Prostate gland (tissue), 2 donors: ENCODE measurements at regions of chr4 and their contacts with region 1.

Region 1: DNA sequence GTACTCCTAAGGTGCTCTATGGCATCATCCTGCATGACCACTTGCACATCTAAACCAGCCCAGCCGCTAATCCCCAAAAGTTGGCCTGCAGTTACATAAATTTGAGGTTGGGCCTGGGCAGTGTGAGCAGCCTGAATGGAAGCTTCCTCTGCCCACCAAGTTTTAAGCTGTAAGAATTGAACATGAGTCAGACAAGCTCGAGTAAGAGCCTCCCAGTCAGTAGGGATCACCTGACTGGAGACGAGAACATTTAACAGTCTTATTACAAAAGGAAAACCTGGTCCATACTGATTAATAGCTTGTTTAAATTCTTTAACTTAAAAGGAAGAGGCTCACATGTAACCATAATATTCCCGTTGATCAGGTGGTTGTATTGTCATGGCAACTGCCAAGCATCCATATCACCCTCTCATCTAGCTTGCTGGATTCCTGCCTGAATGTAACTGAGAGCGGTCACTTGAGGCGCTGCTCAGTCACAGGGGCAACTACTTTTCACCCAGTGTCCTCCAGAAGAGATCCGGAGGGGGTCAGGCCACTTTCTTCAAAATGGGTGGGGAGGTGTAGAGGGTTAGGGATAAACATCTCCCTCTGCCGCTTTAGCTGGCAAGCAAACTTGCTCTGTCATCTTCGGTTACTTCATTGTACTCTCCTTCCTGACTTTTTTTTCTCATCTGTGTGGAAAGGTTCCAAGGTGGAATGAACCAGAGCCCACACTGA is 56.6 kb upstream of the WDR1 start:
- DNase-seq: peak; percentile 52
- H3K4me3 ChIP-seq: no peak overlapping the region
- H3K27ac ChIP-seq: peak overlapping the region; percentile 57 to 63
- H3K4me1 ChIP-seq: peaks cover 8% of the 10 kb centered on the region
- H3K27me3 ChIP-seq: no peaks in the 10 kb centered on the region
- CTCF ChIP-seq: peak in 1 of 4 experiments; percentile 25
- POLR2A ChIP-seq: no peak

Region 2: GRCh38 chr4:10116580-10117358 is 56.4 kb before region 1 on chr4 and contains the start of gene WDR1:
- intact Hi-C with region 1: loop called (anchors 2 kb)
- DNase-seq: peak; percentile 95
- H3K4me3 ChIP-seq: peak within 1 kb of the TSS; percentile 76 to 78
- H3K27ac ChIP-seq: peak within 1 kb of the TSS; percentile 92
- H3K4me1 ChIP-seq: peaks cover 15% of the 10 kb centered on the region
- H3K27me3 ChIP-seq: no peaks in the 10 kb centered on the region
- CTCF ChIP-seq: no peak
- POLR2A ChIP-seq: peak; percentile 93
- total RNA-seq, gene WDR1: 127 to 171 TPM

Region 3: GRCh38 chr4:10232114-10232513 is 58.9 kb after region 1 on chr4:
- intact Hi-C with region 1: loop called (anchors 2 kb)
- DNase-seq: no peak
- H3K4me3 ChIP-seq: no peak overlapping the region
- H3K27ac ChIP-seq: peak overlapping the region; percentile 27 to 55
- H3K4me1 ChIP-seq: no peaks in the 10 kb centered on the region
- H3K27me3 ChIP-seq: no peaks in the 10 kb centered on the region
- CTCF ChIP-seq: no peak
- POLR2A ChIP-seq: no peak

Region 4: DNA sequence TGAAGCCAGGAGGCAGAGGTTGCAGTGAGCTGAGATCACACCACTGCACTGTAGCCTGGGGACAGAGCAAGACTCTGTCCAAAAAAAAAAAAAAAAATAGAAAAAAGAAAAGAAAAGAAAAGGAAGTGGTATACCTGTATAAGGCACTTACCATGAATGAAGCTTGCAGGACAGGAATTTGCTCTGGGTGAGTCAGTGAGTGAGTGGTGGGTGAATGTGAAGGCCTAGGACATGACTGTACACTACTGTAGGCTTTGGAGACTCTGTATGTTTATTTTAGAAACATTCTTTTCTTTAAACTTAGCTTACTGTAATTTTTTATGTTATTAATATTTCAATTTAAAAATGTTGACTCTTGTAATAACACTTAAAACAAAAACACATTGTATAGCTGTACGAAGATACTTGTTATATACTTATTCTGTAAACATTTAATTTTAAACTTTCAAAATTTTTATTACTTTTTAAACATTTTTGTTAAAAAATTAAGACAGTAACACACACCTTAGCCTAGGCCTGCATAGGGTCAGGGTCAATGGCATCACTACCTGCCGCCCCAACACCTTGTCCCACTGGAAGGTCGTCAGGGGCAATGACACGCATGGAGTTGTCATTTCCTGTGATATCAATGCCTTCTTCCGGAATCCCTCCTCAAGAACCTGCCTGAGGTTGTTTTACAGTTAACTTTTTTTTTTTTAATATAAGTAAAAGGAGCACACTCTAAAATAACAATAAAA is 432.7 kb after region 1 on chr4:
- intact Hi-C with region 1: no loop called
- DNase-seq: no peak
- H3K4me3 ChIP-seq: no peak overlapping the region
- H3K27ac ChIP-seq: no peak overlapping the region
- H3K4me1 ChIP-seq: no peaks in the 10 kb centered on the region
- H3K27me3 ChIP-seq: no peaks in the 10 kb centered on the region
- CTCF ChIP-seq: no peak
- POLR2A ChIP-seq: no peak